ENCODE measurements at regions of chr4 and their contacts with region 1.

Region 1: DNA sequence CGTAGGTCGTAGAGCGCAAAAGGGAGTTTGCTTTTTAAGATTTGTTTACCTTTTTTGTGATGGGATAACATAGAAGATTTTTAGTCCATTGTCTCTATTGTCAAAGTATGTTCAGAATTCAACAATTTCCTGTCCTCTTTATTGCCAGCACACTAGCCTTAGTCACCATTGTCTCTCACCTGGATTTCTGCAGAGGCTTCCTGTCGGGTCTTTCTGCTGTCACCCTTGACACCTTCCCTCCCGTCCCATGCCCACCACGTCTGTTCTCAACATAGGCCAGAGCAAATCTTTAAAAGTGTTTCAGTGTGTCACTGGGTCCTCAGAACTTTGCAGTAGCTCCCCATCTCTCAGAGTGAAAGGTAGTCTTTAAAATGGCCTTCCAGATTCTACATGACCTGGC is 323.9 kb downstream of the TENM3 start:
- DNase-seq: no peak
- H3K4me3 ChIP-seq: no peak overlapping the region
- H3K27ac ChIP-seq: no peak overlapping the region
- H3K4me1 ChIP-seq: peaks cover 0 to 9% (median 4%) of the 10 kb centered on the region in 4 experiments; a peak in 3 of 7 replicates
- H3K27me3 ChIP-seq: no peaks in the 10 kb centered on the region
- CTCF ChIP-seq: no peak
- EP300 ChIP-seq: no peak
- POLR2A ChIP-seq: no peak
- RAD21 ChIP-seq: no peak

Region 2: DNA sequence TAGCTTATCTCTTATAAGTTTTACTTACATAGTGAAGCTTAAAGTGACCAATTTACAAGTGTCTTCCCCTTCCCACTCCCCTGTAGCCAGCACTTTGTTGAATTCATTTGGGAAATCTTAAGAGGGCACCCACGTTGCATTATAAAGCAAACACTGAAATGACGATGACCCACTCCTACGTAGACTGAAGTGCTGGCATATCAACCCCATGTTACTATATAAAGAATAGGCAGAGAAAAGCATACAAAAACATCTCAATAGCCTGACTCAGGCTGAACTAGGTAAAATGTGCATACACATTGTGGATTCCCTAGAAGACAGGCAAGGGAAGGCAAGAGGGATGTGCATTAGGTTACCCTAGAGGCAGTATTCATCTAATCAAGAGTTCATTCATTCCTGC is 10.5 kb before region 1 on chr4:
- CTCF ChIA-PET with region 1: interaction called, 3 read pairs
- POLR2A ChIA-PET with region 1: interaction called, 10 read pairs
- DNase-seq: no peak
- H3K4me3 ChIP-seq: no peak overlapping the region
- H3K27ac ChIP-seq: no peak overlapping the region
- H3K4me1 ChIP-seq: peaks cover 3 to 45% (median 22%) of the 10 kb centered on the region in 4 experiments; a peak in 6 of 7 replicates
- H3K27me3 ChIP-seq: no peaks in the 10 kb centered on the region
- CTCF ChIP-seq: no peak
- EP300 ChIP-seq: no peak
- POLR2A ChIP-seq: no peak
- RAD21 ChIP-seq: no peak

Region 3: GRCh38 chr4:182604161-182604622 is 37.1 kb after region 1 on chr4:
- CTCF ChIA-PET with region 1: no interaction called
- POLR2A ChIA-PET with region 1: no interaction called
- DNase-seq: no peak
- H3K4me3 ChIP-seq: no peak overlapping the region
- H3K27ac ChIP-seq: no peak overlapping the region
- H3K4me1 ChIP-seq: no peaks in the 10 kb centered on the region
- H3K27me3 ChIP-seq: peaks cover 0 to 2% (median 0%) of the 10 kb centered on the region in 4 experiments; a peak in 1 of 7 replicates
- CTCF ChIP-seq: no peak
- EP300 ChIP-seq: no peak
- POLR2A ChIP-seq: no peak
- RAD21 ChIP-seq: no peak

Measured in H1 (cell line).